Tibial artery (tissue), 4 donors: ENCODE measurements at regions of chrX and their contacts with region 1.

Region 1: GRCh38 chrX:149631234-149632165 is at the start of gene TMEM185A:
- DNase-seq: peak; percentile 34 to 75
- H3K4me3 ChIP-seq: peak within 1 kb of the TSS; percentile 66 to 86
- H3K27ac ChIP-seq: peak within 1 kb of the TSS; percentile 67 to 72
- H3K4me1 ChIP-seq: peaks cover 0 to 13% (median 0%) of the 10 kb centered on the region in 4 donors
- H3K27me3 ChIP-seq: no peaks in the 10 kb centered on the region
- CTCF ChIP-seq: no peak

Region 2: GRCh38 chrX:149568701-149569296 is 62.7 kb before region 1 on chrX:
- intact Hi-C with region 1: loop called (anchors 10 kb)
- DNase-seq: no peak
- H3K4me3 ChIP-seq: no peak overlapping the region
- H3K27ac ChIP-seq: no peak overlapping the region
- H3K4me1 ChIP-seq: peaks cover 0 to 15% (median 6%) of the 10 kb centered on the region in 4 donors
- H3K27me3 ChIP-seq: no peaks in the 10 kb centered on the region
- CTCF ChIP-seq: no peak